Mammary epithelial cell (primary cell): ENCODE measurements at regions of chr9 and their contacts with region 1.

Region 1: DNA sequence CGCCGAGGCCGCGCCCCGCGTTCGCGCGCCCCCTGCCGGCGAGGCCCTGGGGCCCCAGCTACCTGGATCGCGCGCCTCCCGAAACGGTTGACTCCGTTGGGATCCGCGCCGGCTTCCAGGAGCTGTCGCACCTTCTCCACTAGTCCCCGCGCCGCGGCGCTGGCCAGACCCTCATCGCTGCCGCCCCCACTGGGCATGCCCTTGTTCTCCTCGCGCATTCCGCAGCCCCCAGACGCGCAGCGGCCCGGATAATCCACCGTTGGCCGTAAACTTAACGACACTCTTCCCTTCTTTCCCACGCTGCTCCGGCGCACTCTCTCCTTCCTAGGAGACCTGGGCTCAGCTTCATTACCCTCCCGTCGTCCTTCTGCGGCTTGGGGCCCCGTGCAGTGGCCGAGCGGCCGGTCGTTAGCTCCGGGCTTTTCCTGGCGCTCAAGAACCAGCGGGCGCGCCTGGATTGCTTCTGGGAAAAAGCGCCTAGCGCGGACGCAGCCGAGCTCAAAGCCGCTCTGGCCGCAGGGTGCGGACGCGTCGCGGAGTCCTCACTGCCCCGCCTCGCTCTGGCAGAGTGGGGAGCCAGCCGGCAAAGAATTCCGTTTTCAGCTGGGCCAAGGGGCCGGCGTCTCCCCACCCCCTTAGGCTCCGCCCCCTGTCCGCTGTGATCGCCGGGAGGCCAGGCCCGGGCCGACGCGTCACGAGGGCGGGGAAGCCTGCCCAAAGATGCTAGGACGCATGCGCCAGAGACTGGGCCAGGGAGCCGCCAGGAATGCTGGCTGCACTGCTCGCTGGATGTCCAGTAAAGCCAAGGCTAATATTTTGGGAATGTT is at the start of gene CDKN2B:
- DNase-seq: peak; percentile 97
- H3K4me3 ChIP-seq: peak within 1 kb of the TSS; percentile 95 to 98 (median 96)
- H3K27ac ChIP-seq: peak within 1 kb of the TSS; percentile 88
- H3K4me1 ChIP-seq: peaks cover 12% of the 10 kb centered on the region
- H3K27me3 ChIP-seq: no peaks in the 10 kb centered on the region
- CTCF ChIP-seq: peak; percentile 63 to 97
- total RNA-seq, gene CDKN2B: 27.6 to 50.0 TPM

Region 2: DNA sequence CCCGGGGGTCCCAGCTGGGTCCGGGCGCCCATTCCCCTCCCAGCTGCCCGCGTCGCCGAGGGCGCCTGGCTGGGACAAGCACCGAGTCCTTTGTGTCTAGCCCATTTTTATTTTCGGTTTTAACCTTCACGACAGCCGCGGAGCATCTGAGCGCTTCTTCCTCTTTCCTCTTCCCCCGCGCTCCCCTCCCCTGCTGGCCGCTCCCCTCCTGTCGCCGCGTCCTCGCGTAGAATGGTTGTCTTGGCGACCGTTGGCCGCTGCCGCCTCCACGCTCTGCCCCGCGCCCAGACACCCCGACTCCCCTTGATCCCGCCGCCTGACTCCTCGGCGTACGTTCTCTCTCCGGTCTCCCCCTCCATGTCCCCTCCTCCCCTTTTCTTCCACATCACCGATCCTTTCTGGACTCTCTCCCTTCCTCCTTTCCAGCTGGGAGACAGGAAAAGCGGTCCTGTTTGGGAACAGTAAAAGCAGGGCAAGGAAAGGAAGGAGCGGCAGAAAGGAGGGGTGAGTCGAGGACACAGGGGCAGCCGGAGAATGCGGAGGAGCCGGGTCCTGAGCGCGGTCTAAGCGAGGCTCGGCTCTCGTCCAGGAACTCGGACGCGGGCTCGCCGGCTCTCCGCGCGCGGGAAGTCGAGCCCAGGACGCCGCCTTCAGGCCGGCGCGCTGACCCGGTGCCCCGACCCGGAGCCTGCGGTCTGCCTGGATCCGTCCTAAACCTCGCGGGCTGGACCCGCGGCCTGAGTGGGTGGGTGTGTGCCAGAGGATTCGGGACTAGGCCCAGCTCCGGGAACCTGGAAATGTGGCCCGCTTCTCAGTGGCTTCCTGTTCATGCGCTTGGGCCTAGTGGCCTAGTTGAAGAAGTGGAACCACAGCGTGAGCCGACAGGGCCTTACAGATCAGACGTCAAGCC is 13.5 kb before region 1 on chr9:
- CTCF ChIA-PET with region 1: no interaction called
- dilution Hi-C with region 1: no loop called
- in situ Hi-C with region 1: no loop called
- intact Hi-C with region 1: loop called (anchors 2 kb)
- DNase-seq: peak; percentile 80
- H3K4me3 ChIP-seq: peak overlapping the region; percentile 71 to 98 (median 94)
- H3K27ac ChIP-seq: peak overlapping the region; percentile 96
- H3K4me1 ChIP-seq: peaks cover 19% of the 10 kb centered on the region
- H3K27me3 ChIP-seq: no peaks in the 10 kb centered on the region
- CTCF ChIP-seq: peak in 1 of 2 donors; percentile 46

Region 3: GRCh38 chr9:22238809-22239684 is 230.1 kb after region 1 on chr9:
- CTCF ChIA-PET with region 1: interaction called, 8 read pairs
- dilution Hi-C with region 1: no loop called
- in situ Hi-C with region 1: no loop called
- intact Hi-C with region 1: loop called (anchors 1 kb)
- DNase-seq: peak; percentile 71
- H3K4me3 ChIP-seq: peak overlapping the region in 2 of 3 experiments; percentile 15 to 34
- H3K27ac ChIP-seq: peak overlapping the region; percentile 87
- H3K4me1 ChIP-seq: peaks cover 45% of the 10 kb centered on the region
- H3K27me3 ChIP-seq: no peaks in the 10 kb centered on the region
- CTCF ChIP-seq: peak; percentile 39 to 60

Region 4: GRCh38 chr9:22452415-22453010 is 443.6 kb after region 1 on chr9:
- CTCF ChIA-PET with region 1: no interaction called
- dilution Hi-C with region 1: no loop called
- in situ Hi-C with region 1: no loop called
- intact Hi-C with region 1: loop called (anchors 10 kb)
- DNase-seq: no peak
- H3K4me3 ChIP-seq: no peak overlapping the region
- H3K27ac ChIP-seq: no peak overlapping the region
- H3K4me1 ChIP-seq: no peaks in the 10 kb centered on the region
- H3K27me3 ChIP-seq: no peaks in the 10 kb centered on the region
- CTCF ChIP-seq: peak; percentile 79 to 91